Activated naive CD4-positive, alpha-beta T cell treated with anti-CD3 and anti-CD28 coated beads for 36 hours (primary cell): ENCODE measurements at regions of chr15 and their contacts with region 1.

Region 1: DNA sequence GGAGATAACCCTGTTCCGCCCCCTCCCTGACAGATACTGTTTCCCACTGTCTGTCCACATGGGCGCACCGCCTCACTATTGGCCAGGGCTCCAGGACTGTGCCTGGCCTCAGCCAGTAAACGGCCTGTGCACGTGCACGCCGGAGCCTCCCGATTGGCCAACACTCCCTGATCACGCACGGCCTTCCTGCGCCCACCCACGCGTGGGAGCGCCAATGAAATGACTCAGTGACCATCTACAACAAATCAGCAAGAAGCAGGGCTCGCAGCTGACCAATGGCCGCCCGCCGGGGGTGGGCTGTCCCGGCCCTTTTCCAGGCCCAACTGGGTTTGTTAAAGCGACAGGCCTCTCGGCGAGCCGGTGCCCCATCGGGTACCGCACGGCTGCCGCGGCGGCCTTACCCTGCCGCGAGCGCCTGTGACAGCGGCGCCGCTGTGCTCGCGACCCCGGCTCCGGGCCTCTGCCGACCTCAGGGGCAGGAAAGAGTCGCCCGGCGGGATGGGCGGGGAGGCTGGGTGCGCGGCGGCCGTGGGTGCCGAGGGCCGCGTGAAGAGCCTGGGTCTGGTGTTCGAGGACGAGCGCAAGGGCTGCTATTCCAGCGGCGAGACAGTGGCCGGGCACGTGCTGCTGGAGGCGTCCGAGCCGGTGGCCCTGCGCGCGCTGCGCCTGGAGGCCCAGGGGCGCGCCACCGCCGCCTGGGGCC is at the start of gene ARRDC4:
- DNase-seq: peak; percentile 98
- H3K4me3 Mint-ChIP-seq: peak within 1 kb of the TSS; percentile 78
- H3K27ac Mint-ChIP-seq: no peak within 1 kb of the TSS
- H3K4me1 Mint-ChIP-seq: peaks cover 16% of the 10 kb centered on the region
- H3K27me3 Mint-ChIP-seq: no peaks in the 10 kb centered on the region
- total RNA-seq, gene ARRDC4: 0.17 to 0.20 TPM

Region 2: DNA sequence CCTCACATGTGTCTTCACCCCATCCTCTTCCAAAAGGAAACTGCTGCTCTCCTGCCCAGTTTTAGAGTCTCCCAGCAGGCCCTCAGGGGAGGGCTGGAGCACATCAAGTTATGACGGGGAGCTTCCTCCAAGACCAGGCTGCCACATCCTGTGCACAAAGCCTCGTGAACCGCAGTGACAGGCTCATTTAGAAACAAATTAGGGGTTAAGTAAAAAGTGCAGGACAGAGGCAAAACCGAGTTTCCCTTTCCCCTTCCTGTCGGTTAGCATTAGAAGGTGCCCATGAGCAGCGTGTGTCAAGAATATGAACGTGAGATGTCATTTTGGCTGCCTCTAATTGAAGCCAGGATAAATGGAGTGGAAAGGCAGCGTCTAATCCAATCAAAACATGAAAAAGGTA is 199.7 kb after region 1 on chr15:
- CTCF ChIA-PET with region 1: no interaction called
- intact Hi-C with region 1: loop called (anchors 1 kb)
- DNase-seq: peak; percentile 77
- H3K4me3 Mint-ChIP-seq: no peak overlapping the region
- H3K27ac Mint-ChIP-seq: no peak overlapping the region
- H3K4me1 Mint-ChIP-seq: peaks cover 17% of the 10 kb centered on the region
- H3K27me3 Mint-ChIP-seq: no peaks in the 10 kb centered on the region

Region 3: GRCh38 chr15:99014803-99015676 is 1054.5 kb after region 1 on chr15:
- CTCF ChIA-PET with region 1: no interaction called
- intact Hi-C with region 1: loop called (anchors 10 kb)
- DNase-seq: peak; percentile 85
- H3K4me3 Mint-ChIP-seq: peak overlapping the region; percentile 64
- H3K27ac Mint-ChIP-seq: no peak overlapping the region
- H3K4me1 Mint-ChIP-seq: peaks cover 2% of the 10 kb centered on the region
- H3K27me3 Mint-ChIP-seq: peaks cover 33% of the 10 kb centered on the region